ENCODE measurements at regions of chr1 and their contacts with region 1.

Region 1: DNA sequence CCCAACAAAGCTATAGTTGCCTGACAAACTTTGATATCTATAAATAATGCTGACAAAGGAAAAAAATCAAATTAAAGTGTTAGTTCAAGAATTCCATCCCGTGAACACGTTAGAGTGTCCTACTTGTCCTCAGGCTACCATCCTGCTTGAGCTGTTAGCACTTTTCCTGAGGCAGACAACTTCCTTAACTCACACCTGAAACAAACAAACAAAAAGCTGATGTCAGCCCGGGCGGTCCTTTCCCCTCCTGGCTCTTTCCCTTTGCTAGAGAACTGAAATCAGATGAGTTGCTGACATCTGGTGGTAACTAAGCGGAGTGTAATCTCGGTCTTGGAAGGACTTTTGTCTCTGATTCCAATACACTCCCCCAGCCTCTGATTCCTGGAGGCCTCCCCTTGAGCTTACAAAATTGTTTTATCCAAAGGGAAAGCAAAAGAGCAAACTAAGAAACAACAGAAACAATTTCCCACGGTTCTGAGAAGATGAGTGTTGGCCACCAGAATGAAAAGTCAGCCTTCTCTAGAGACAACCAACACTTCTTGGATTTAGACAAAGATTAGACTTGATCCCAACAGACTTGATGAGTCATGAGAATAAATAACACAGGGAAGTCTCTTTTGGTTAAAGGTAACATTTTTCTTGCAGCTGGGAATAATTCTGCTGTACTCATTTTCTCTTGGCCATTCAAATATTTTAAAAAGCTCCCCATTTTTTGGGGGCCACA is 135.4 kb downstream of the PROX1 start:
- DNase-seq: peak; percentile 88
- H3K4me3 ChIP-seq: no peak overlapping the region
- H3K27ac ChIP-seq: peak overlapping the region; percentile 75
- H3K4me1 ChIP-seq: peaks cover 25% of the 10 kb centered on the region
- H3K27me3 ChIP-seq: no peaks in the 10 kb centered on the region
- CTCF ChIP-seq: peak; percentile 64 to 67
- POLR2A ChIP-seq: no peak

Region 2: DNA sequence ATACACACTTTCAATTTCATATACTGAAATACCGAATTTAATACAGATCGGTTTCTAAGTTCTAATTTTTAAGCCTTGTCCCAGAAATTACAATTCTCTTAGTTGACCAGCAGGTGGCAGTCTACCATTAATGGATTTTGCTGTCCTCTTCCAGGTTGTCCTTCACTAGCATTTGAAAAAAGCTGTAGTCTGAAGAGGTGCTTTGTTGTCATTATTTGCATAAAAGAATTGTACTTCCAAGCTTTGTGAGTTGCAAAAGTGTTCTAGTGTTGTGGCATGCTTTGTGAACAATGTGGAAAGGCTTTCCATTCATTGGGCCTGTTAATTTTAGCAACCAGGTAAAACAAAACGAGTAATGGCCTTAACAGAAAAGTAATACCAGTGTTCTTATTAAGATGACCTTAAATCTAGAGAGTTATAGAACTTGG is 878.5 kb before region 1 on chr1:
- CTCF ChIA-PET with region 1: interaction called, 11 read pairs
- POLR2A ChIA-PET with region 1: no interaction called
- dilution Hi-C with region 1: no loop called
- intact Hi-C with region 1: loop called (anchors 1 kb)
- DNase-seq: peak; percentile 68
- H3K4me3 ChIP-seq: no peak overlapping the region
- H3K27ac ChIP-seq: no peak overlapping the region
- H3K4me1 ChIP-seq: no peaks in the 10 kb centered on the region
- H3K27me3 ChIP-seq: no peaks in the 10 kb centered on the region
- CTCF ChIP-seq: peak; percentile 56 to 57
- POLR2A ChIP-seq: no peak

Region 3: GRCh38 chr1:213564215-213564659 is 559.0 kb before region 1 on chr1:
- CTCF ChIA-PET with region 1: interaction called, 13 read pairs
- POLR2A ChIA-PET with region 1: no interaction called
- dilution Hi-C with region 1: no loop called
- intact Hi-C with region 1: loop called (anchors 1 kb)
- DNase-seq: peak; percentile 51
- H3K4me3 ChIP-seq: no peak overlapping the region
- H3K27ac ChIP-seq: no peak overlapping the region
- H3K4me1 ChIP-seq: no peaks in the 10 kb centered on the region
- H3K27me3 ChIP-seq: no peaks in the 10 kb centered on the region
- CTCF ChIP-seq: peak; percentile 40 to 52
- POLR2A ChIP-seq: no peak

Region 4: GRCh38 chr1:213977486-213977842 is 145.8 kb before region 1 on chr1:
- CTCF ChIA-PET with region 1: interaction called, 13 read pairs
- POLR2A ChIA-PET with region 1: interaction called, 3 read pairs
- dilution Hi-C with region 1: no loop called
- intact Hi-C with region 1: no loop called
- DNase-seq: peak; percentile 98
- H3K4me3 ChIP-seq: no peak overlapping the region
- H3K27ac ChIP-seq: peak overlapping the region; percentile 62
- H3K4me1 ChIP-seq: peaks cover 38% of the 10 kb centered on the region
- H3K27me3 ChIP-seq: peaks cover 0 to 2% of the 10 kb centered on the region in 2 experiments
- CTCF ChIP-seq: peak in 1 of 2 donors; percentile 17
- POLR2A ChIP-seq: peak; percentile 52

Region 5: DNA sequence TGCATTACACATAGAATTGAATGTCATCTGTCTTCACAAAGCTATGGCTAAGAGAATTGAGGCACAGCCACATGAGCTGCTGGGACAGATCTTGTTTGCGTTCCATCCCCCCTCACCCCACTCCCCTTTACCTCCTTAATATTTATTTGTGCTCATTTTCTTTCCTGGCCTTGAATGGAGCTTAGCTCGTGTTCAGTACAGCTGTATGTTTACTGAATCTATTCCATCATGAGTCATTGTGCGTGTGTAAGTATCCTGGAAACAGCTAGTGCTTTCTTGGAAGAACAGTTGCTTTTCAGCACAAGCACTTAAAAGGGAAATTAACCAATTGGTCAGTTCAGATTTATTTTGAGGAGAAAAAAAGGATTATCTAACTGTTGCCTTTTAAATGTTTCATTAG is 120.8 kb before region 1 on chr1:
- CTCF ChIA-PET with region 1: interaction called, 20 read pairs
- POLR2A ChIA-PET with region 1: no interaction called
- dilution Hi-C with region 1: no loop called
- intact Hi-C with region 1: loop called (anchors 1 kb)
- DNase-seq: peak; percentile 95
- H3K4me3 ChIP-seq: no peak overlapping the region
- H3K27ac ChIP-seq: peak overlapping the region; percentile 17
- H3K4me1 ChIP-seq: peaks cover 11% of the 10 kb centered on the region
- H3K27me3 ChIP-seq: no peaks in the 10 kb centered on the region
- CTCF ChIP-seq: no peak
- POLR2A ChIP-seq: no peak

Region 6: GRCh38 chr1:214187121-214187900 is 64.1 kb after region 1 on chr1:
- CTCF ChIA-PET with region 1: no interaction called
- POLR2A ChIA-PET with region 1: no interaction called
- dilution Hi-C with region 1: no loop called
- intact Hi-C with region 1: loop called (anchors 2 kb)
- DNase-seq: peak; percentile 2
- H3K4me3 ChIP-seq: no peak overlapping the region
- H3K27ac ChIP-seq: no peak overlapping the region
- H3K4me1 ChIP-seq: peaks cover 3% of the 10 kb centered on the region
- H3K27me3 ChIP-seq: peaks cover 33 to 54% of the 10 kb centered on the region in 2 experiments
- CTCF ChIP-seq: no peak
- POLR2A ChIP-seq: no peak

Measured in endothelial cell of umbilical vein (primary cell).